IMR-90 (cell line): ENCODE measurements at regions of chr10 and their contacts with region 1.

Region 1: DNA sequence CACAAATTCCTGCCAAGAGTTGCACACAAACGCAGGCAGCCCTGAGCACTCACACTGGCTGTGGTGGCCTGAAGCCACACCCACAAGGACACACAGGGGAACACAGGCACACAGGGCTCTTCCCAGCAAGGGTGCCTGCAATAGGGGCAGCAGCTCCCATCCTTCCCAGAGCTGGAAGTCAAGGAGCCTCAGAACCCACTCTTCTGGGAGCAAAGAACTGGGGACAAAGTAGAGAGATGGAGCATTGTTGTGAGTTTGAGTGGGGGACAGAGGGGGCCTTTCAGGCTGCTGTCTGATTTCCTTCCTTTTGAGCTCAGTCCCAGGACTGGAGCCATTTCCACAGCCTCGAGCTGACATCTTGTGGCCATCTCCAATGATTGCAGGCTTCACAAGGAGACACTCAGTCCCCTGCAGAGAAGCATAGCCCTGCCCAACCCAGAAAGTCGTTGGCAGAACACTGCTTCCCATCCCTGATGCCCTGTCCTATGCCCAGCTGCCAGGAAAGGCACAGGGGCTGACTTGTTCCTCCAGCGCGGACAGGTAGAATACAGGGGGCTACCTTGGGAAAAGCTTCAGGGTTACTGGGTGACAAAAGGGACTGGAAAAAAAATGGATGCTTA is 34.4 kb upstream of the SLF2 start:
- DNase-seq: peak; percentile 77
- ATAC-seq: peak; percentile 94
- H3K4me3 ChIP-seq: no peak overlapping the region
- H3K27ac ChIP-seq: no peak overlapping the region
- H3K4me1 ChIP-seq: peaks cover 19% of the 10 kb centered on the region
- H3K27me3 ChIP-seq: no peaks in the 10 kb centered on the region
- CTCF ChIP-seq: peak; percentile 86
- POLR2A ChIP-seq: peak; percentile 50; the same call in 1 of the 2 replicates
- RAD21 ChIP-seq: peak; percentile 96

Region 2: GRCh38 chr10:100346765-100347567 is 531.4 kb before region 1 on chr10 and contains the start of gene SCD:
- CTCF ChIA-PET with region 1: no interaction called
- POLR2A ChIA-PET with region 1: no interaction called
- dilution Hi-C with region 1: no loop called
- in situ Hi-C with region 1: loop called (anchors 25 kb)
- intact Hi-C with region 1: no loop called
- DNase-seq: peak; percentile 88
- ATAC-seq: peak; percentile 89
- H3K4me3 ChIP-seq: peak within 1 kb of the TSS; percentile 92
- H3K27ac ChIP-seq: peak within 1 kb of the TSS; percentile 45
- H3K4me1 ChIP-seq: peaks cover 18% of the 10 kb centered on the region
- H3K27me3 ChIP-seq: no peaks in the 10 kb centered on the region
- CTCF ChIP-seq: no peak
- POLR2A ChIP-seq: peak; percentile 63
- RAD21 ChIP-seq: no peak
- total RNA-seq, gene SCD: 49.2 and 50.7 TPM in 2 replicates

Region 3: DNA sequence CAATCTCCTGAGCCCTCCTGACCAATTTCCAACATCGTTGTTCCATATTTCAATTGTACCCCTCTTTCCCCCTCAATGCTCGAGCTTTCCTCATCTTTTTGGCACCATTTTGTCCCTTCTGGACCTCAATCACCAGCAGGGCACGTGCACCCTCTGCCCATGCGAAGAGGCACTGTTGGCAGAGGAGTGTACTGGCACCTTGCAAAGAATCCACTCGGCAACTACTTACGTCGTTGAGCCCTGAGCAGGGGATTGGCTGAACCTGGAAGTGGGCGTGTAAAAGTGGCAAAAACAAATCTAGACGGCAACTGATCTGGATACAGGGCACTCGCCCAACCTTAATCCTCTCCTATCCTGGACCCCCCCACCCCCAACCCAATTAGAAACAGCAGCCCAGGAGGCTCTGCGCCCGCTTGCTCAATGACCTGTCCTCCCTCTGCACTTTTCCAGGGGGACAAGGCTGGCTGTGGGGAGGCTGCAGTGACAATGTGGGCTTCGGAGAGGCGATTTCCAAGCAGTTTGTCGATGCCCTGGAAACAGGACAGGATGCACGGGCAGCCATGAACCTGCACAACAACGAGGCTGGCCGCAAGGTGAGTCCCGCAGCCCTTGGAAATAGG is 396.8 kb before region 1 on chr10:
- CTCF ChIA-PET with region 1: no interaction called
- POLR2A ChIA-PET with region 1: no interaction called
- dilution Hi-C with region 1: no loop called
- in situ Hi-C with region 1: no loop called
- intact Hi-C with region 1: loop called (anchors 1 kb)
- DNase-seq: peak; percentile 81
- ATAC-seq: peak; percentile 95
- H3K4me3 ChIP-seq: peak overlapping the region; percentile 38
- H3K27ac ChIP-seq: no peak overlapping the region
- H3K4me1 ChIP-seq: peaks cover 4% of the 10 kb centered on the region; the same call in 1 of the 2 replicates
- H3K27me3 ChIP-seq: peaks cover 36% of the 10 kb centered on the region
- CTCF ChIP-seq: no peak
- POLR2A ChIP-seq: no peak
- RAD21 ChIP-seq: no peak

Region 4: DNA sequence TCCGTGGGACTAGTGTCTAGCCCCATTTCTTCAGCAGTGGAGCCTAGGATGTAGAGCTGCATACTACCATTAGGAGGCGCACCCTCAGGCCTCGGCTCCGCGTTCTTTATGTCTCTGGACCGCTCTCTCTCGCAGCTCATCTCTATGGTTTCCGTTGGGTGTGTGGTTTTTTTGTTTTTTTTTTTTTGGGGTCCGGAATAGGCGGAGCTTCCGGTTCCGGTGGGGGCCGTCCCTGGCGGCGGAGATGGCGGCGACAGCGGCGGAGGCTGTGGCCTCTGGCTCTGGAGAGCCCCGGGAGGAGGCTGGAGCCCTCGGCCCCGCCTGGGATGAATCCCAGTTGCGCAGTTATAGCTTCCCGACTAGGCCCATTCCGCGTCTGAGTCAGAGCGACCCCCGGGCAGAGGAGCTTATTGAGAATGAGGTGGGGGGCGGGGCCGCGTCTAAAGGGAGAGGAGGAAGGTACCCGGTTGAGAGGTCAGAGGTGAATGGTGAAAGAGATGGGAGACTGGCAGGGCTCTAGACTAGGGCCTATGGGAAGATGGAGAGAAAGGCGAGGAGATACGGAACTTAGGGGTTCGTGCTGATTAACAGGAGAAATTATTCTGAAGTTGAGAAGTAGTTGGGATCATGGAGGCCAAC is 342.6 kb before region 1 on chr10 and contains the start of gene HIF1AN:
- CTCF ChIA-PET with region 1: interaction called, 5 read pairs
- POLR2A ChIA-PET with region 1: no interaction called
- dilution Hi-C with region 1: no loop called
- in situ Hi-C with region 1: no loop called
- intact Hi-C with region 1: loop called (anchors 1 kb)
- DNase-seq: peak; percentile 95
- ATAC-seq: peak; percentile 100
- H3K4me3 ChIP-seq: peak within 1 kb of the TSS; percentile 68
- H3K27ac ChIP-seq: peak within 1 kb of the TSS; percentile 57; the same call in 1 of the 2 replicates
- H3K4me1 ChIP-seq: peaks cover 1% of the 10 kb centered on the region; the same call in 1 of the 2 replicates
- H3K27me3 ChIP-seq: no peaks in the 10 kb centered on the region
- CTCF ChIP-seq: peak; percentile 93
- POLR2A ChIP-seq: peak; percentile 82
- RAD21 ChIP-seq: peak; percentile 25; the same call in 1 of the 2 replicates
- total RNA-seq, gene HIF1AN: 10.2 and 10.3 TPM in 2 replicates

Region 5: DNA sequence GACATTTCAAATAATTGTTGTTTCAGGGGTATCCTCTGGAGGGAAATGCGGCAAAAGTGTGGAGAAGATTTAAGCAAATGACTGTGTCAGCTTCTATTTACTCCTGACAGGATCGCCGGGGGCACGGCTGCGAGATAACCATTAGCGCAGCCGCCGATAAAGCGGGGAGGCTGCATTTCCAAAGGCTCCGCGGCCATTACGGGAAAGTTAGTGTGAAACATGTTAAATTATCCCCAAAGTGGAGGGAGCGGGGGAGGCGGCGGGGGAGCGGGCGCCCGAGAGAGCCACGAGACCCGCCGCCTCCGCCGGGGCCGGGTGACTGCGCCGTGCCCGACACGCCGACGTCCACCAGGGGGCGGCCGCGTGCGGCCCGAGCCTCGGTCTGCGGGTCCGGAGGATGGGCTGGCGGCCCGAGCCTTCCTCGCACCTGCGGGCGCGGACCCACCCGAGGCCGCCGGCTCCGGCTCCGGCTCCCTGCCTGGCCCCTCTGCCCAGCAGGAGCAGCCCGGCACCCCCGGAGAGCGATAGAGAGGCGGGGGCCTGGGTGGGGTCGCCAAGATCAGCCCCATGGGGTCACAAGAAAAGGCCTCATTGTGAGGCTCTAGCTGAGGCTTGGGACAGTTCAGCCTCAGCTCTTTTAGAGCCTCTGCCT is 207.4 kb before region 1 on chr10:
- CTCF ChIA-PET with region 1: no interaction called
- POLR2A ChIA-PET with region 1: no interaction called
- dilution Hi-C with region 1: no loop called
- in situ Hi-C with region 1: loop called (anchors 5 kb)
- intact Hi-C with region 1: loop called (anchors 1 kb)
- DNase-seq: no peak
- ATAC-seq: peak; percentile 88
- H3K4me3 ChIP-seq: no peak overlapping the region
- H3K27ac ChIP-seq: no peak overlapping the region
- H3K4me1 ChIP-seq: no peaks in the 10 kb centered on the region
- H3K27me3 ChIP-seq: peaks cover 46% of the 10 kb centered on the region
- CTCF ChIP-seq: peak; percentile 63
- POLR2A ChIP-seq: no peak
- RAD21 ChIP-seq: peak; percentile 53

Region 6: GRCh38 chr10:100728928-100729861 is 149.2 kb before region 1 on chr10:
- CTCF ChIA-PET with region 1: no interaction called
- POLR2A ChIA-PET with region 1: no interaction called
- dilution Hi-C with region 1: no loop called
- in situ Hi-C with region 1: no loop called
- intact Hi-C with region 1: no loop called
- DNase-seq: peak; percentile 13
- ATAC-seq: peak; percentile 55
- H3K4me3 ChIP-seq: no peak overlapping the region
- H3K27ac ChIP-seq: no peak overlapping the region
- H3K4me1 ChIP-seq: no peaks in the 10 kb centered on the region; the same call in 1 of the 2 replicates
- H3K27me3 ChIP-seq: peaks cover 78% of the 10 kb centered on the region
- CTCF ChIP-seq: peak; percentile 36
- POLR2A ChIP-seq: no peak
- RAD21 ChIP-seq: peak; percentile 18; the same call in 1 of the 2 replicates

Region 7: GRCh38 chr10:101012525-101013364 is 134.3 kb after region 1 on chr10:
- CTCF ChIA-PET with region 1: interaction called, 3 read pairs
- POLR2A ChIA-PET with region 1: interaction called, 13 read pairs
- dilution Hi-C with region 1: no loop called
- in situ Hi-C with region 1: no loop called
- intact Hi-C with region 1: no loop called
- DNase-seq: peak; percentile 95
- ATAC-seq: peak; percentile 81
- H3K4me3 ChIP-seq: no peak overlapping the region; the same call in 1 of the 2 replicates
- H3K27ac ChIP-seq: peak overlapping the region; percentile 22
- H3K4me1 ChIP-seq: peaks cover 33% of the 10 kb centered on the region
- H3K27me3 ChIP-seq: no peaks in the 10 kb centered on the region
- CTCF ChIP-seq: peak; percentile 90
- POLR2A ChIP-seq: no peak
- RAD21 ChIP-seq: peak; percentile 70